ENCODE measurements at regions of chr16 and their contacts with region 1.

Region 1: DNA sequence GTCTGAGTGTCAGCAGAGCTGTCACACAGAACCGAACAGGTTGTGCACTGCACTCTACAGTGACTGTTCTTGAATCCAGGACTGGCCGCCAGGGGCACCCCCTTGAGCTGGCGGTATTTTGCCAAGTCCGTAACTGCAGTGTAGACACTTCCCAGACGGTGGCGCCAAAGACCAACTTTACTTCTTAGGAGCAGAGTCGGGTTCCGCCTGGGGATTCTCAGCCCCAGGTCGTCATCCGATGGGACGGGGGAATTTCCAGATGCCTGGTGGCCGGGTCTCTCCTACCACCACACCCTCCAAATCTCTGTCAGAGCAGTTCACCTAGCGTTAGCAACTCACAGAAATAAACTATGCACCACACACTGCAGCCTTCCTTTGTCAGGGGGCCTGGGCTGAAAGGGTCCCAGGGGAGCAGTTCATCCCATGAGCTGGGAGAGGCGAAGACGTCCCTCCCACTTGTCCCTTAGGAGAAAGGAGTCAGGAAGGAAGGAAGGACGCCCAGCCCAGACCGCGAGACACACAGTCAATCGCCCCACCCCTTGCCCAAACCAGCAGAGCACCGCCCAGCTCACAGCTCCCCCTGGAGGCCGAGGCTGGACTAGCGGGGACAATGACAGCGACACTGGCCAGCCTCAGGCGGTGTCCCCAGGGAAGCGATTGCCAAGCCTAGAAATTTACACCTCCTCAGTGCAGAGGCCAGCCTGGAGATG is 7.4 kb upstream of the RIPOR1 start:
- DNase-seq: peak; percentile 85
- H3K4me3 ChIP-seq: peak overlapping the region; percentile 72
- H3K27ac ChIP-seq: peak overlapping the region; percentile 99
- H3K27me3 ChIP-seq: no peaks in the 10 kb centered on the region
- CTCF ChIP-seq: peak; percentile 98

Region 2: DNA sequence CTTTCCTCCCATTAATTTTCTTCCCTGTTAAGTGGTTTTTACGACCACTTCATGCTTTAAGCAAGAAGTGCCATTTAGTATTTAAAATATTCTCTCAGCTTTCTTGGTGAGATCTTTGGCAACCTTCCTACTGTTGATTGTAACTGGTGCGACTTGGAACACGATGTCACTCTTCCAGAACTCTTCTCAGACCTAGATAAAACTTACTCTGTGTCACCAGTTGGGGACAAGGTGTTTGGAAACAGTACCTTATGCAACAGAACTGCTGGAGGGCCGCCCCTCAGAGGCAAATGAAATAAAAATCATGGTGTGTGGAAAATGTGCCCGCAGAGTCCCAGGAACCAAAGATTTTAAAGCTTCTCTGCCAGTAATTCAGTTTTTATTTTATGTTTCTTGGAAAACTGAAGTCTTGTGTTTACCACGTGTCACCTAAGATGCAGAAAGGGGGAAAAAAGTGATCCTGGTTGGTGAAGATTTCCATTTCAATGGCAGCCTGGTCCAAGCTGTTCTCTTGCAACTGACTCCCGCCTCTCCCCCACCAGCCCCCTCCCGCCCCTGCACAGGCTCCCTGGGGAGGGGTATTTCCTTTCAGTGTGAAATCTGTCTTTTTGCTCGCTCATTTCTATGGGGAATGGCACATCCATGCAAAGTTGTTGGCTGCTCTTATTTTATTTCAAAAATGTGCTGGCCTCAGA is 97.5 kb before region 1 on chr16:
- CTCF ChIA-PET with region 1: no interaction called
- POLR2A ChIA-PET with region 1: no interaction called
- DNase-seq: no peak
- H3K4me3 ChIP-seq: no peak overlapping the region
- H3K27ac ChIP-seq: no peak overlapping the region
- H3K27me3 ChIP-seq: peaks cover 36% of the 10 kb centered on the region
- CTCF ChIP-seq: no peak

Region 3: GRCh38 chr16:67480833-67481560 is 40.3 kb before region 1 on chr16 and contains the start of gene ATP6V0D1:
- CTCF ChIA-PET with region 1: interaction called, 54 read pairs
- POLR2A ChIA-PET with region 1: interaction called, 3 read pairs
- DNase-seq: peak; percentile 96
- H3K4me3 ChIP-seq: peak within 1 kb of the TSS; percentile 96
- H3K27ac ChIP-seq: peak within 1 kb of the TSS; percentile 92
- H3K27me3 ChIP-seq: no peaks in the 10 kb centered on the region
- CTCF ChIP-seq: peak; percentile 89
- polyA plus RNA-seq, gene ATP6V0D1: 101 and 121 TPM in 2 replicates

Region 4: GRCh38 chr16:67546761-67547422 is 25.6 kb after region 1 on chr16:
- CTCF ChIA-PET with region 1: interaction called, 17 read pairs
- POLR2A ChIA-PET with region 1: interaction called, 8 read pairs
- DNase-seq: no peak
- H3K4me3 ChIP-seq: no peak overlapping the region
- H3K27ac ChIP-seq: peak overlapping the region; percentile 21
- H3K27me3 ChIP-seq: no peaks in the 10 kb centered on the region
- CTCF ChIP-seq: peak; percentile 95

Region 5: DNA sequence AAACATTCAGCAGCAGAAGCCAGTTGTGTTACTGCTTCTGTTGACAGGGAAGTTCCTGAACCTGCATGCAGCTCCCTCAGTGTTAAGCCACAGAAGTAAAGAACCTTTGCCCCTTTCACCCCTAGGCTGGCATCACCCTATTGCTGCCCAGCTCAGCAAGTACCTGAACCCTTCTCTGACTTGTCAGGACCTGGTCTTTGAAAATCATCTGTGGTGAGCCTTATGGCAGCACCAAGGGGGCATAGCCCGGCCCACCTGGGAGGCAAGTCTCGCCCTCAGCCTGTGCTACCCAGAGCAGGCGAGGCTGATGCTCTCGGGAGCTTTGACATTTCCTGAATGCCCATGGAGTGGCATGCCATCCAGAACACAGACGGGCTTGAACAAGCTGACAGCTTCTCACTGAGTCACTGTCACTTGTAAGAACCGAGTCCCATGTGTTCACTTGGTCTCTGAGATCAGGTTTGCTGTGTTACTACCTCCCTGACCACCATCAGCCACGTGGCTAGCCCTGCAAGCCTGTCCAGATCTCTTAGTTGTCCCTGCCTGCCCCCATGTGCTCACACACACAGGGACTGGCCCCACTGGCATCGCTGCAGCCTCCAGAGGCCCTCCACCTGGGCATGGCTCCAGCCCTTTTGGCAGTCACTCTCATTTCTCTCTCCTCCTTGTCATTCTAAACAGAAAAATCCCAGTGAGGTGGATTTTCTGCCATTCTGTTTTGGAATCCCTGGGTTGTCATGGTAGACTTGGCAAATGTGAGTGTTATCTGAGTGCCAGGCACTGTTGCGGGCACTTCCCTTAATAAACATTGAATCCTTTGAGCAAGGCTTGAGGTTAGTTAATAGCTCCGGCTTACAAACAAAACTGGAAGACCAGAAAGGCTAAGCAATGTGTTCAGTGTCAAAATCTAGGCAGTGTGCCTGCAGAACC is 120.8 kb after region 1 on chr16:
- CTCF ChIA-PET with region 1: interaction called, 75 read pairs
- POLR2A ChIA-PET with region 1: no interaction called
- DNase-seq: no peak
- H3K4me3 ChIP-seq: no peak overlapping the region
- H3K27ac ChIP-seq: no peak overlapping the region
- H3K27me3 ChIP-seq: peaks cover 22% of the 10 kb centered on the region
- CTCF ChIP-seq: no peak

Region 6: GRCh38 chr16:67667817-67668494 is 146.7 kb after region 1 on chr16:
- CTCF ChIA-PET with region 1: interaction called, 181 read pairs
- POLR2A ChIA-PET with region 1: interaction called, 3 read pairs
- DNase-seq: peak; percentile 79
- H3K4me3 ChIP-seq: no peak overlapping the region
- H3K27ac ChIP-seq: peak overlapping the region; percentile 57
- H3K27me3 ChIP-seq: no peaks in the 10 kb centered on the region
- CTCF ChIP-seq: peak; percentile 91

Measured in AG04450 (cell line).